ENCODE measurements at regions of chr2 and their contacts with region 1.

Region 1: DNA sequence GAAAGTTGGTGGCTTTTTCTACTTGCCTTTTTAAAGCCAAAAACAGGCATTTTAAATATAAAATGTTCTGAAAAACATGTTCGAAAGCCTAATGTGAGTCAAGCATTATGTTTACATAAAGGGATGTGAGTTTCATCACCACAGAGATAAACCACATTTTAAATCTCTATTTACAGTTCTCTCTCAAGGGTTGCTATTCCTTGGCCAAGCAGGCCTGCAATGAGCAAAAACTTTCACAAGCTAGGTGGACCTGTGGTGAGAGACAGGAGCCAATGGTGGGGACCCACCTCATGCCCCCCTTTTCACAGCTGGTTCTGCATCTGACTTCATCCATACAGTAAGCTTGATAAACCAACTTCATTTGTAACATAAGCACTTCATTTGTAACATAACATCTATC is 65.1 kb downstream of the CUL3 start:
- DNase-seq: no peak
- ATAC-seq: no peak
- H3K4me3 Mint-ChIP-seq: peak overlapping the region; percentile 68
- H3K27ac Mint-ChIP-seq: peak overlapping the region; percentile 96
- H3K4me1 Mint-ChIP-seq: peaks cover 89% of the 10 kb centered on the region
- H3K27me3 Mint-ChIP-seq: no peaks in the 10 kb centered on the region
- CTCF ChIP-seq: no peak

Region 2: GRCh38 chr2:223896833-223897311 is 623.2 kb before region 1 on chr2:
- CTCF ChIA-PET with region 1: no interaction called
- POLR2A ChIA-PET with region 1: interaction called, 4 read pairs
- intact Hi-C with region 1: loop called (anchors 1 kb)
- DNase-seq: peak; percentile 22
- ATAC-seq: peak; percentile 45
- H3K4me3 Mint-ChIP-seq: peak overlapping the region; percentile 67
- H3K27ac Mint-ChIP-seq: peak overlapping the region; percentile 99
- H3K4me1 Mint-ChIP-seq: peaks cover 74% of the 10 kb centered on the region
- H3K27me3 Mint-ChIP-seq: no peaks in the 10 kb centered on the region
- CTCF ChIP-seq: no peak

Region 3: DNA sequence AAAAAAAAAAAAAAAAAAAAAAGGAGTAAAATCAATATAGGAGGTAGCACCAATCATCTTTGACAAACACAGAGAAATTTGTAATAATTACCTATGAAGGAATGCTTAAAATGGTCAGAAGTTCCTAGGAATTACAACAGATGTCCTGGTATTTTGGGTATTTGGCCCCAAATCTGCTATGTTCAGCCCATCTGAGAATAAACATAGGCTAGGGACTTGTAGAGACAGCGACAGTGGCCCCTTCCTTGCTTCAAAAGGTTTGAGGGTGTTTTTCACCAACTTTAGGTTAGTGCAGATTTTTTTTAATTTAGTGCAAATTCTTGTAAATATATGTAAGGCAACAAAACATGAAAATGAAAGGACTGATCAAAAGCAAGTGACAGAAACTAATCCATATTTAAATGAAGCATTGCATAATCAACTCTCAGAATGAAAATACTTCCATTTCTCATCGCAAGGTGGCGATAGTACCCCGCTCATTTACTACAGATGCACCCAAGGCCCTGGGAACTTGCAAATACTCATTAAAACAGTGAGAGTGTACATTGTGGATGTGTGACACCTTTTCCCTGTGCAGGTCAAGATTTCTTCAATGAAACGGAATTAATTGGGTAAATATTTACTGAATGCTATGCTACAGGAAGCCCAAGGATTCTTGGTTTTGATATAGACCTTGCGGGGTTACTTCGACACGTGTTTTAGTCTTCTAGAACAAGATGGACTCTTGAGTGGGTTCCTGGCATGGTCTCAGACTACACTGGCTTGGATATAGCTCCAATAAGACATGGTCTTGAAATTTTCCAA is 162.8 kb before region 1 on chr2:
- CTCF ChIA-PET with region 1: no interaction called
- POLR2A ChIA-PET with region 1: no interaction called
- intact Hi-C with region 1: no loop called
- DNase-seq: no peak
- ATAC-seq: peak; percentile 73
- H3K4me3 Mint-ChIP-seq: no peak overlapping the region
- H3K27ac Mint-ChIP-seq: no peak overlapping the region
- H3K4me1 Mint-ChIP-seq: no peaks in the 10 kb centered on the region
- H3K27me3 Mint-ChIP-seq: peaks cover 8% of the 10 kb centered on the region
- CTCF ChIP-seq: no peak

Region 4: GRCh38 chr2:224507789-224508188 is 12.3 kb before region 1 on chr2:
- CTCF ChIA-PET with region 1: no interaction called
- POLR2A ChIA-PET with region 1: interaction called, 6 read pairs
- intact Hi-C with region 1: loop called (anchors 2 kb)
- DNase-seq: no peak
- ATAC-seq: no peak
- H3K4me3 Mint-ChIP-seq: no peak overlapping the region
- H3K27ac Mint-ChIP-seq: no peak overlapping the region
- H3K4me1 Mint-ChIP-seq: peaks cover 12% of the 10 kb centered on the region
- H3K27me3 Mint-ChIP-seq: no peaks in the 10 kb centered on the region
- CTCF ChIP-seq: no peak

Region 5: GRCh38 chr2:224561234-224562005 is 41.4 kb after region 1 on chr2:
- CTCF ChIA-PET with region 1: no interaction called
- POLR2A ChIA-PET with region 1: interaction called, 8 read pairs
- intact Hi-C with region 1: loop called (anchors 5 kb)
- DNase-seq: no peak
- ATAC-seq: peak; percentile 61
- H3K4me3 Mint-ChIP-seq: no peak overlapping the region
- H3K27ac Mint-ChIP-seq: no peak overlapping the region
- H3K4me1 Mint-ChIP-seq: peaks cover 26% of the 10 kb centered on the region
- H3K27me3 Mint-ChIP-seq: no peaks in the 10 kb centered on the region
- CTCF ChIP-seq: no peak

Region 6: DNA sequence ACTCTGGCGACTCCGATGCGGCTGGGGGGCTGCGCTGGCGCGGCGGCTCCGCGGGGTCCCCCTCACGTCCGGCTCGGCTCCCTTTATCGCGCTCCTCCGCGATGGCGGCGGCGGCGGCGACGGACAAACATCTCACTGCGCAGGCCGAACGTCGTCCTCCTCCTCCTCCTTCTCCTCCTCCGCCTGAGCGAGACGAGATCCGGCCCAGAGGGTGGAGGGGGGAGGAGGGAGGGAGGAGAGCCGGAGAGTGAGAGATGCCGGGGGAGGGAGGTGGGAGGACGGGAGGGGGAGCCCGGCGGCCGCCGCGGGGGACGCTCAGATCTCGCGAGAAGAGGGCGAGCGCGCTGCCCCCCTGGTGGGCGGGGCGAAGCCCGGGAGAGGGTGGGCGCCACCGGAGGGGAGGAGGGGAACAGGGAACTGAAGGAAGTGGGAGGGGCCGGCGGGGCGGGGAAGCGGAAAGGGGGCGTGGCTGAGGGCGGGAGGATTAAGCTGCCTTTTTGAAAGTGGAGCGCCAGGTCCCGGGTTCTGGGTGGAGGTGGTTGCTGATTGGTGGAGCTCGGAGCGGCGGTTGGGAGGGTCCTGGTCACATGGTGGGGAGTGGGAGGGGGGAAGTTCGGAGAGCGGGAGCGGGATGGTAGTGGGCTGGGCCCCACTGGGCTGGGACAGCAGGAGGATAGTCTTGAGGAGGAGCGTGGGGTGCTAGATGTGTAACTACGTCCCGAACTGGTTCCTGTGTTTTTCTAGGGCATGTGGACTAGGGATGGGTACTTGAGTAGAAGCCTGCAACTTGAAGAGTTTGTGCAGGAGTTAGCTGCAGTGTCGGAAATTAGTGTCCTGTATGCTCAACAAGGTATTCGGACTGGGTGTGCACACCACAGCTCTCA is 65.4 kb after region 1 on chr2 and contains the start of gene CUL3:
- CTCF ChIA-PET with region 1: no interaction called
- POLR2A ChIA-PET with region 1: interaction called, 84 read pairs
- intact Hi-C with region 1: loop called (anchors 1 kb)
- DNase-seq: peak; percentile 99
- ATAC-seq: peak; percentile 89
- H3K4me3 Mint-ChIP-seq: peak within 1 kb of the TSS; percentile 96
- H3K27ac Mint-ChIP-seq: peak within 1 kb of the TSS; percentile 93
- H3K4me1 Mint-ChIP-seq: peaks cover 47% of the 10 kb centered on the region
- H3K27me3 Mint-ChIP-seq: no peaks in the 10 kb centered on the region
- CTCF ChIP-seq: no peak
- total RNA-seq, gene CUL3: 99.4 and 114 TPM in 2 replicates

Measured in activated B cell treated with CpG ODN at 0.5 μM for 24 hours (primary cell).